ENCODE measurements at regions of chr7 and their contacts with region 1.

Region 1: DNA sequence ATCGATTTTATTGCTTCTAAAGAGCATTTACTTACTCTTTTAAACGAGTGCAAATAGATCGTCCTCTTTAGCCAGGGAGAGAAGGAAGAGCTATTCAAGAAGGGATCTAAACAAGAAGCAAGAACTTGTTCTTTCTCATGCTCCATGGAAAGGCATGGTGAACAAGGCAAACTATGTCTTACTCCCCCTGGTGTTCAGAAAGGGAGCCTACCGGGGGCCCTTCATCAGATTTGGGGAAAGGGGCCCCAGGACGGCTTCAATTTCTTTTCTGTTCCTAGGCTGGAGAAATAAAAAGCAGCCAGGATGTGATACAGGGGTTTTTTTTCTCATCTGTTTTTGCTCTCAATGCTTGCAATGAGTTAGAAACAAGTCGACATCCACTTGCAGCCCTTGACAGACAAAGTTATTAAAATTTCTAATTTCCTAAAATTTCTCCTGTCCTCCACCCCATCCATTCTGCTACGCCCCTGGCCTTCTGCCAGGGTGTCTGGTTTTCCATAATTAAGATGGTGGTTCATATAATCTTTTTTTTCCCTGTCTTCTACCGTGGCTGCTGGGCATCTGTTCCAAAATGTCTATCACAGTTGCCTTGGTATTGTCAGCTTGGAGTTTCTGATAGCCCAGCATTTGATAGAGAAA is 214.4 kb downstream of the CREB5 start:
- DNase-seq: peak; percentile 70
- ATAC-seq: peak; percentile 85
- H3K4me3 Mint-ChIP-seq: no peak overlapping the region
- H3K27ac Mint-ChIP-seq: no peak overlapping the region
- H3K4me1 Mint-ChIP-seq: peaks cover 20% of the 10 kb centered on the region
- H3K27me3 Mint-ChIP-seq: no peaks in the 10 kb centered on the region
- CTCF ChIP-seq: peak; percentile 81

Region 2: GRCh38 chr7:28296571-28297483 is 329.9 kb before region 1 on chr7:
- CTCF ChIA-PET with region 1: interaction called, 11 read pairs
- POLR2A ChIA-PET with region 1: no interaction called
- DNase-seq: peak; percentile 71
- ATAC-seq: peak; percentile 55
- H3K4me3 Mint-ChIP-seq: no peak overlapping the region
- H3K27ac Mint-ChIP-seq: 0 out of 2 replicates have a peak overlapping the region, but pooled peaks have one; percentile 30
- H3K4me1 Mint-ChIP-seq: peaks cover 61% of the 10 kb centered on the region
- H3K27me3 Mint-ChIP-seq: no peaks in the 10 kb centered on the region
- CTCF ChIP-seq: peak; percentile 25; the same call in 1 of the 2 replicates

Region 3: DNA sequence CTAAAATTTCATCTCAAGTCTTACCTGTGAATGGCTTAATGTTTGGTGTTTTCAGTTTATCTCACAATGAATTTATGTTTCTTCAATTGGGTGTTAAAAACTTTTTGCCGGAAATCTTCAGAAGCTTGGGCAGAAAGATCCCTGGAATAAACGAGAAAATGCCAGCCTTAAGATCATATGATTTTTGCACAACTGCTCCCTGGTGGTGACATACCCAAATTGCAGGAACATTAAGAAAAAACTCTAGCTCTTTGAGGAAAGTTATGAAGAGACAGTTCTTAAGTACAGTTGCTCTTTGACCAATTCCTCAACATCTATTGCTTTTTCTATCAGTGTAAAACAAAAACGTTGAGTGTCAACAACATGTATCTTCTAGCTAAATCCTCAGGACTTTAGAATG is 262.7 kb before region 1 on chr7:
- CTCF ChIA-PET with region 1: interaction called, 10 read pairs
- POLR2A ChIA-PET with region 1: interaction called, 4 read pairs
- DNase-seq: no peak
- ATAC-seq: no peak
- H3K4me3 Mint-ChIP-seq: no peak overlapping the region
- H3K27ac Mint-ChIP-seq: no peak overlapping the region
- H3K4me1 Mint-ChIP-seq: peaks cover 14% of the 10 kb centered on the region
- H3K27me3 Mint-ChIP-seq: no peaks in the 10 kb centered on the region
- CTCF ChIP-seq: 0 out of 2 replicates have a peak, but pooled peaks have one; percentile 30

Region 4: GRCh38 chr7:28615091-28615490 is 11.7 kb before region 1 on chr7:
- CTCF ChIA-PET with region 1: interaction called, 22 read pairs
- POLR2A ChIA-PET with region 1: no interaction called
- DNase-seq: peak; percentile 33
- ATAC-seq: peak; percentile 93
- H3K4me3 Mint-ChIP-seq: no peak overlapping the region
- H3K27ac Mint-ChIP-seq: no peak overlapping the region
- H3K4me1 Mint-ChIP-seq: no peaks in the 10 kb centered on the region
- H3K27me3 Mint-ChIP-seq: no peaks in the 10 kb centered on the region
- CTCF ChIP-seq: no peak